ENCODE measurements at regions of chr17 and their contacts with region 1.

Region 1: GRCh38 chr17:15909481-15909991 is 35.4 kb upstream of the ADORA2B start:
- DNase-seq: no peak
- H3K4me3 ChIP-seq: no peak overlapping the region
- H3K27ac ChIP-seq: 0 out of 2 replicates have a peak overlapping the region, but pooled peaks have one; percentile 12
- H3K4me1 ChIP-seq: peaks cover 38% of the 10 kb centered on the region
- H3K27me3 ChIP-seq: no peaks in the 10 kb centered on the region
- CTCF ChIP-seq: no peak

Region 2: GRCh38 chr17:15947271-15947670 is 37.7 kb after region 1 on chr17:
- CTCF ChIA-PET with region 1: no interaction called
- POLR2A ChIA-PET with region 1: no interaction called
- intact Hi-C with region 1: no loop called
- DNase-seq: peak; percentile 57 to 65
- H3K4me3 ChIP-seq: peak overlapping the region; percentile 91
- H3K27ac ChIP-seq: peak overlapping the region; percentile 92
- H3K4me1 ChIP-seq: peaks cover 22% of the 10 kb centered on the region
- H3K27me3 ChIP-seq: no peaks in the 10 kb centered on the region
- CTCF ChIP-seq: no peak

Region 3: GRCh38 chr17:16040710-16041251 is 131.2 kb after region 1 on chr17:
- CTCF ChIA-PET with region 1: no interaction called
- POLR2A ChIA-PET with region 1: no interaction called
- intact Hi-C with region 1: no loop called
- DNase-seq: no peak
- H3K4me3 ChIP-seq: no peak overlapping the region
- H3K27ac ChIP-seq: no peak overlapping the region
- H3K4me1 ChIP-seq: no peaks in the 10 kb centered on the region
- H3K27me3 ChIP-seq: no peaks in the 10 kb centered on the region
- CTCF ChIP-seq: no peak

Region 4: GRCh38 chr17:16122697-16123434 is 213.3 kb after region 1 on chr17:
- CTCF ChIA-PET with region 1: no interaction called
- POLR2A ChIA-PET with region 1: no interaction called
- intact Hi-C with region 1: no loop called
- DNase-seq: no peak
- H3K4me3 ChIP-seq: no peak overlapping the region
- H3K27ac ChIP-seq: no peak overlapping the region
- H3K4me1 ChIP-seq: no peaks in the 10 kb centered on the region
- H3K27me3 ChIP-seq: no peaks in the 10 kb centered on the region
- CTCF ChIP-seq: no peak

Region 5: GRCh38 chr17:16189791-16190348 is 280.3 kb after region 1 on chr17:
- CTCF ChIA-PET with region 1: no interaction called
- POLR2A ChIA-PET with region 1: interaction called, 23 read pairs
- intact Hi-C with region 1: no loop called
- DNase-seq: no peak
- H3K4me3 ChIP-seq: no peak overlapping the region
- H3K27ac ChIP-seq: no peak overlapping the region
- H3K4me1 ChIP-seq: no peaks in the 10 kb centered on the region
- H3K27me3 ChIP-seq: no peaks in the 10 kb centered on the region
- CTCF ChIP-seq: no peak